K562 (cell line): ENCODE measurements at regions of chr17 and their contacts with region 1.

Region 1: DNA sequence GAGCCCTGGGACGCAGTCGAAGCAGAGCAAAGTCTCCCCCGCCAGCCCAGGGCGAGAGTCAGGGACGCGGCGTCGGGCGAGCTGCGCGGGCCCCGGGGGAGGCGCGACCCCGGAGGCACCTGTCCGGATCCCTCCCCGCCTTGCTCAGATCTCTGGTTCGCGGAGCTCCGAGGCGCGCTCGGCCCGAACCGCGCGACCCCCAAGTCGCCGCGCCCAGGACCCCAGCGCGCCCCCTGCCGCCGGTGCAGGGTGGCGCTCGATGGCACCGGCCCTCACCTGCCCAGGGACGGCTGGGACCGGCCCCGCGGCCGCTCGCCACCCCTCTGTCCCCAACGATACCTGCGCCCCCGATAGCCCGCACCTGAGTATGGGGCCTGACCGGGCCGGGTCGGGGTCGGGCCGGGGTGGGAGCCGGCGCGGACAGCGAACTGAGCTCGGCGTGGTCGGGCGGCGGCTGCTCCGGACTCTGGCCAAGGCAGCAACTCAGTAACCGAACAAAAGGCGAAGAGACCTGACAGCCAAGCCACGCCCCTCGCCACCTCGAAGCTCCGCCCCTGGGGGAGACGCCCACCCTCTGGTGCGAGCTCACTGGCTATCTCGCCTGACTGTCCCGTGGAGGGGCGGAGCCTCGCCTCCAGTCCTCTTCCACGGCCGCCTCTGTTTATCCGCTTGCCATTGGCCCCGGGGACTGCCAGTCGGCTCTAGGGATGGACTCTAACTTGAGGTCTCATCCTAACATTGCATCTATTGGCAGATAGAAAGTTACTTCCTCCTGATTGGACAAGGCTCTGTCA is at the start of gene JUP:
- DNase-seq: peak; percentile 98 to 99 (median 98)
- ATAC-seq: peak; percentile 93
- H3K4me3 ChIP-seq: peak within 1 kb of the TSS; percentile 59
- H3K27ac ChIP-seq: peak within 1 kb of the TSS; percentile 89
- H3K4me1 ChIP-seq: peaks cover 31 to 45% of the 10 kb centered on the region in 2 experiments
- H3K27me3 ChIP-seq: no peaks in the 10 kb centered on the region
- CTCF ChIP-seq: peak; percentile 68 to 81 (median 80)
- EP300 ChIP-seq: no peak
- POLR2A ChIP-seq: peak; percentile 92
- RAD21 ChIP-seq: peak in 1 of 2 experiments; percentile 59; a peak in 2 of 4 replicates
- polyA plus RNA-seq, gene JUP: 6.4 to 8.2 TPM

Region 2: GRCh38 chr17:41705271-41705991 is 81.0 kb before region 1 on chr17:
- CTCF ChIA-PET with region 1: no interaction called
- POLR2A ChIA-PET with region 1: no interaction called
- in situ Hi-C with region 1: no loop called
- intact Hi-C with region 1: no loop called
- DNase-seq: no peak
- ATAC-seq: peak; percentile 62
- H3K4me3 ChIP-seq: no peak overlapping the region
- H3K27ac ChIP-seq: no peak overlapping the region
- H3K4me1 ChIP-seq: no peaks in the 10 kb centered on the region; a peak in 3 of 5 replicates
- H3K27me3 ChIP-seq: peaks cover 0 to under 1% of the 10 kb centered on the region in 2 experiments; a peak in 2 of 5 replicates
- CTCF ChIP-seq: no peak
- EP300 ChIP-seq: no peak
- POLR2A ChIP-seq: no peak
- RAD21 ChIP-seq: no peak

Region 3: GRCh38 chr17:41754066-41754465 is 32.4 kb before region 1 on chr17:
- CTCF ChIA-PET with region 1: no interaction called
- POLR2A ChIA-PET with region 1: interaction called, 10 read pairs
- in situ Hi-C with region 1: no loop called
- intact Hi-C with region 1: no loop called
- DNase-seq: no peak
- ATAC-seq: peak; percentile 13; the same call in 2 of the 3 replicates
- H3K4me3 ChIP-seq: no peak overlapping the region
- H3K27ac ChIP-seq: no peak overlapping the region
- H3K4me1 ChIP-seq: peaks cover 0 to 8% of the 10 kb centered on the region in 2 experiments; a peak in 3 of 5 replicates
- H3K27me3 ChIP-seq: no peaks in the 10 kb centered on the region
- CTCF ChIP-seq: no peak
- EP300 ChIP-seq: no peak
- POLR2A ChIP-seq: no peak
- RAD21 ChIP-seq: no peak

Region 4: DNA sequence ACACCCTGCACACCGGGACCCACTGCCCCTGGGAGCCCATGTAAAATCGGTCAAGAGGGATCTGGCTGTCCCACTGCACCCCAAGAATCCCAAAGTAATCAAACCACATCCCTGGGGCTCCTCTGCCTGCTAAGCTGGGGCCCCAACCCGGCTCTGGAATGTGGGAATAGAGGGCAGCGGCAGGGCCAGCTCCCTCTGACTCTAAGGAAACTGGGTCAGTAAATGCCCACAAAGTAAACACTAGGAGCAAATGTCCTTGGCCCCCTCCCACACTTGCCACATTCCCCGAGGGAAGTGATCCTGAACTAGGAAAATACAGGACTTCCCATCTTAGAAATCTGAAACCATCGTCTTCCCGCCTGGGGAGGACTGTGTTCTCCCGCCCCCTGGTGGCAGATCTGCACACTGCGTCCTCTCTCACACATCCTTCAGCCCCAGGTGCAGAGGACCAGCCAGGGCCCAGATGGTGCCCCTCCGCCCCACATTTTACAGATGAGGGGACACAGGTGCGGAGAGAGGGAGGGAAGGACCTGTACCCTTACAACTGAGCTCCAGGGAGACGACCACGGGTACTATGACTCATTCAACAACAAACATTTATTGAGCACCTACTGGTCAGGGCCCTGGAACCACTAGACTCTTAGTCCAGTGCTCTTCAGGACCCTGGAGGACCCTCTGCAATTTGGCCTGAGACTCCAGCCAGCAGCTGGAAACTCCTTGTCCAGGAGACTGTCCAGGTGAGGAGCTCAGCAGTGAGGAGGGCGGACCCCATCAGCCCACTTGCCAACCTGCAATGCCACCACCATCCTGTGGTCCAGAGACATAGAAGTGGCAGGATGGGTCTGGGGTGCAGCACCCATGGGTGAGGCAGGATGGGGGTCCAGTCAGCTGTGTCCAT is 15.2 kb after region 1 on chr17:
- CTCF ChIA-PET with region 1: interaction called, 4 read pairs
- POLR2A ChIA-PET with region 1: interaction called, 7 read pairs
- in situ Hi-C with region 1: no loop called
- intact Hi-C with region 1: loop called (anchors 2 kb)
- DNase-seq: peak; percentile 79 to 86 (median 80)
- ATAC-seq: peak; percentile 87
- H3K4me3 ChIP-seq: no peak overlapping the region
- H3K27ac ChIP-seq: no peak overlapping the region
- H3K4me1 ChIP-seq: peaks cover 9 to 29% of the 10 kb centered on the region in 2 experiments
- H3K27me3 ChIP-seq: no peaks in the 10 kb centered on the region
- CTCF ChIP-seq: peak; percentile 92 to 97 (median 93)
- EP300 ChIP-seq: no peak
- POLR2A ChIP-seq: no peak
- RAD21 ChIP-seq: peak; percentile 92 to 99

Region 5: GRCh38 chr17:41864836-41865595 is 78.6 kb after region 1 on chr17 and contains the start of gene KLHL11:
- CTCF ChIA-PET with region 1: no interaction called
- POLR2A ChIA-PET with region 1: interaction called, 5 read pairs
- in situ Hi-C with region 1: no loop called
- intact Hi-C with region 1: loop called (anchors 2 kb)
- DNase-seq: peak; percentile 87 to 95 (median 90)
- ATAC-seq: peak; percentile 98
- H3K4me3 ChIP-seq: peak within 1 kb of the TSS; percentile 96
- H3K27ac ChIP-seq: peak within 1 kb of the TSS; percentile 81
- H3K4me1 ChIP-seq: peaks cover 20 to 25% of the 10 kb centered on the region in 2 experiments
- H3K27me3 ChIP-seq: no peaks in the 10 kb centered on the region
- CTCF ChIP-seq: peak in 2 of 3 experiments; percentile 35 to 44; a peak in 2 of 6 replicates
- EP300 ChIP-seq: no peak
- POLR2A ChIP-seq: peak; percentile 87
- RAD21 ChIP-seq: no peak; a peak in 1 of 4 replicates
- polyA plus RNA-seq, gene KLHL11: 0.20 to 0.28 TPM